ENCODE measurements at regions of chr5 and their contacts with region 1.

Region 1: GRCh38 chr5:54492178-54492577 is 25.4 kb upstream of the SNX18 start:
- DNase-seq: no peak
- H3K4me3 ChIP-seq: no peak overlapping the region
- H3K27me3 ChIP-seq: peaks cover 2% of the 10 kb centered on the region; the same call in 1 of the 2 replicates
- CTCF ChIP-seq: no peak

Region 2: GRCh38 chr5:54243473-54244080 is 248.6 kb before region 1 on chr5:
- CTCF ChIA-PET with region 1: interaction called, 45 read pairs
- POLR2A ChIA-PET with region 1: no interaction called
- DNase-seq: no peak
- H3K4me3 ChIP-seq: no peak overlapping the region
- H3K27me3 ChIP-seq: no peaks in the 10 kb centered on the region
- CTCF ChIP-seq: peak; percentile 76

Region 3: GRCh38 chr5:54310433-54311175 is 181.6 kb before region 1 on chr5 and contains the start of gene ARL15:
- CTCF ChIA-PET with region 1: interaction called, 12 read pairs
- POLR2A ChIA-PET with region 1: no interaction called
- DNase-seq: peak; percentile 84
- H3K4me3 ChIP-seq: peak within 1 kb of the TSS; percentile 91
- H3K27me3 ChIP-seq: no peaks in the 10 kb centered on the region
- CTCF ChIP-seq: no peak
- polyA plus RNA-seq, gene ARL15: 11.9 and 16.0 TPM in 2 replicates

Region 4: DNA sequence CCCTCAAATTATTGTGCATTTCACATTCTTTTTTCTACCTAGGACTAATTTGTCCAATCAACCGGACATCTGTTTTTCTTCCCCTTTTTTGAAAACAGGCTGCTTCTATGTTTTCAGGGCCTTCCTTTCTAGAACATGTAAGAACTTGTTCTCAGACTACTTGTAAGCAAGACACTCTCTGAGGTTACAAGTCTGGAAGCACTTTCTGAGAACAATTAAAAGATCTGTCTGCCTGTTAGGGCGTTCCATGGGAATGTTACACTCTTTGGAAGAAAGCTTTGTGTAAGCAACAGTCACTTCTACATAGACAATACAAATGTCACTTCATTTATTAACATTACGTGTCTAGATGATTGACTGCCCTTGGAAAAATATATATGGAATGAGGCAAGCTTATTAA is 87.6 kb before region 1 on chr5:
- CTCF ChIA-PET with region 1: no interaction called
- POLR2A ChIA-PET with region 1: no interaction called
- DNase-seq: no peak
- H3K4me3 ChIP-seq: no peak overlapping the region
- H3K27me3 ChIP-seq: no peaks in the 10 kb centered on the region; the same call in 1 of the 2 replicates
- CTCF ChIP-seq: no peak

Region 5: DNA sequence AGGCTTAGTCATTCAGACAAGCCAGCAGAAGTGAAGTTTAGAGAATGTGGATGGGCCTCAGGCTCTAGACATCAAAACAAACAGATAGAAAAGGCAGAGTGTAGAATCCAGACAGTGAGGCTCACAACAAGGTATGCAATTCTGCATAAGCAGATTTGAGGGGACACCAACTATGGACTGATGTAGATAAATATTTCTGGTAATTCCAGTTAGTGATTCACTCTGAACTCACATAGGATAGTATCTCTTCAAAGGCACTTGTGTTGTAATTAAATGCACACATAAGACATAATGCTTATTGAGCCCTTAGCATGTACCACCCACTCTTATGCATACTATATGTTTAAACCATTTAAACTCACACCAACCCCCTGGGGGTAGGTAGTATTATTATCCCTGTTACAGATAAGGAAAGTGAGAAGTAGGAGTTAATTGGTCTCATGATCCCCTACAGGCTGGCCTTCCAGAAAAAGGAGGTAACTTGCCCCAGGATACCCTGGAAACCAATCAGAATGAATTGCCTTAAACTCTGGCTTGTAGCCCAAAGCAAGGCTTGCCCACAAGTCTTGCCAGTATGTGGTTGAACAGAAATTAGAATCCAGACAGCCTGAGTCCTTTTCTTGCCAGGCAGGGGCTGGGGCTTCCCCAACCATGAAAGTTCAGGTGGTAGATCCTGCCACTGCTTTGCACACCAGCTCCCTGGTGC is 76.1 kb before region 1 on chr5:
- CTCF ChIA-PET with region 1: interaction called, 10 read pairs
- POLR2A ChIA-PET with region 1: no interaction called
- DNase-seq: no peak
- H3K4me3 ChIP-seq: no peak overlapping the region
- H3K27me3 ChIP-seq: peaks cover 2% of the 10 kb centered on the region; the same call in 1 of the 2 replicates
- CTCF ChIP-seq: no peak

Region 6: GRCh38 chr5:54443270-54443669 is 48.9 kb before region 1 on chr5:
- CTCF ChIA-PET with region 1: interaction called, 69 read pairs
- POLR2A ChIA-PET with region 1: no interaction called
- DNase-seq: no peak
- H3K4me3 ChIP-seq: no peak overlapping the region
- H3K27me3 ChIP-seq: peaks cover 1% of the 10 kb centered on the region; the same call in 1 of the 2 replicates
- CTCF ChIP-seq: peak; percentile 49

Region 7: DNA sequence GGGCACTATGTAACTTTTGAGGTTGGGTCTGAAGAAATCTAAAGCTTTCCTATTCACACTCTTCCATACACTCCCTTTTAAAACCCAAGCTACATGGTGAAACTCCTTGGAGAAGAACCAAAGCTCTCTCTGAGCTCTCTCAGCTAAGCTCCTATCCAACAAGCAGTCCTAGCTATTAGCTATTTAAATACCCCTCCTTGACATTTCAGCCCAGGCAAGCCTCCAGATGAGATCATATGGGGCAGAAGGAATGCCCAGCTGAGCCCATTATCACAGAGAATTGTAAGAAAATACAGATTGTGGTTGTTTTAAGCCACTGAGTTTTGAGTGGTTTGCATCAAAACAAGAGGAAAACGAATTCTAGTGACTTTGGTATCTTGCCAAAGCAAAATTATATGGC is 21.5 kb before region 1 on chr5:
- CTCF ChIA-PET with region 1: interaction called, 17 read pairs
- POLR2A ChIA-PET with region 1: no interaction called
- DNase-seq: no peak
- H3K4me3 ChIP-seq: no peak overlapping the region
- H3K27me3 ChIP-seq: no peaks in the 10 kb centered on the region
- CTCF ChIP-seq: no peak